MCF 10A (cell line): ENCODE measurements at regions of chr21 and their contacts with region 1.

Region 1: GRCh38 chr21:29298348-29299045 is at the start of gene BACH1:
- DNase-seq: peak; percentile 88
- H3K4me3 Mint-ChIP-seq: peak within 1 kb of the TSS; percentile 81
- H3K27ac Mint-ChIP-seq: peak within 1 kb of the TSS; percentile 61
- H3K4me1 Mint-ChIP-seq: peaks cover 38% of the 10 kb centered on the region
- H3K27me3 Mint-ChIP-seq: no peaks in the 10 kb centered on the region
- CTCF ChIP-seq: peak; percentile 35
- total RNA-seq, gene BACH1: 69.3 and 76.6 TPM in 2 replicates

Region 2: GRCh38 chr21:29091032-29091431 is 207.5 kb before region 1 on chr21:
- CTCF ChIA-PET with region 1: interaction called, 24 read pairs
- POLR2A ChIA-PET with region 1: interaction called, 37 read pairs
- intact Hi-C with region 1: loop called (anchors 2 kb)
- DNase-seq: peak; percentile 65
- H3K4me3 Mint-ChIP-seq: no peak overlapping the region
- H3K27ac Mint-ChIP-seq: peak overlapping the region; percentile 80
- H3K4me1 Mint-ChIP-seq: peaks cover 34% of the 10 kb centered on the region
- H3K27me3 Mint-ChIP-seq: no peaks in the 10 kb centered on the region
- CTCF ChIP-seq: no peak

Region 3: GRCh38 chr21:29164325-29164942 is 134.1 kb before region 1 on chr21:
- CTCF ChIA-PET with region 1: interaction called, 93 read pairs
- POLR2A ChIA-PET with region 1: interaction called, 89 read pairs
- intact Hi-C with region 1: loop called (anchors 1 kb)
- DNase-seq: peak; percentile 89
- H3K4me3 Mint-ChIP-seq: no peak overlapping the region
- H3K27ac Mint-ChIP-seq: peak overlapping the region; percentile 93
- H3K4me1 Mint-ChIP-seq: peaks cover 49% of the 10 kb centered on the region
- H3K27me3 Mint-ChIP-seq: no peaks in the 10 kb centered on the region
- CTCF ChIP-seq: peak; percentile 84

Region 4: DNA sequence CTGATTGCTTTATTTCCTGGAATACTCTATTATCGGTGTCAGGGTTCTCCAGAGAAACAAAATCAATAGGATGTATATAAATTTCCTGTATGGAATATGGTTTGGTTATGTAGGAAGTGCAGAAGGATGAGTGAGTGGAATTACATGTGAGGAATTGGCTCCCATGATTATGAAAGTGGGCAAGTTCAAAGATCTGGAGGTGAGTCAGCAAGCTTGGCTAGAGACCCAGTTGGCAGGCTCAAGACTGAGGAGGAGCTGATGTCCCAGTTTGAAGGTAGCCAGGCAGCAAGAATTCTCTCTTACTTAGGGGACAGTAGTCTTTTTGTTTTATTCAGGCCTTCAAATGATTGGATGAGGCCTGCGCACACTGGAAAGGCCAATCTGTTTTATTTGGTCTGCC is 110.6 kb before region 1 on chr21:
- CTCF ChIA-PET with region 1: interaction called, 10 read pairs
- POLR2A ChIA-PET with region 1: interaction called, 126 read pairs
- intact Hi-C with region 1: no loop called
- DNase-seq: peak; percentile 95
- H3K4me3 Mint-ChIP-seq: peak overlapping the region; percentile 51
- H3K27ac Mint-ChIP-seq: peak overlapping the region; percentile 84
- H3K4me1 Mint-ChIP-seq: peaks cover 43% of the 10 kb centered on the region
- H3K27me3 Mint-ChIP-seq: no peaks in the 10 kb centered on the region
- CTCF ChIP-seq: no peak

Region 5: GRCh38 chr21:29258626-29259335 is 39.7 kb before region 1 on chr21:
- CTCF ChIA-PET with region 1: interaction called, 7 read pairs
- POLR2A ChIA-PET with region 1: interaction called, 256 read pairs
- intact Hi-C with region 1: loop called (anchors 2 kb)
- DNase-seq: peak; percentile 89
- H3K4me3 Mint-ChIP-seq: peak overlapping the region; percentile 47
- H3K27ac Mint-ChIP-seq: peak overlapping the region; percentile 95
- H3K4me1 Mint-ChIP-seq: peaks cover 55% of the 10 kb centered on the region
- H3K27me3 Mint-ChIP-seq: no peaks in the 10 kb centered on the region
- CTCF ChIP-seq: no peak

Region 6: GRCh38 chr21:29318354-29318753 is 19.9 kb after region 1 on chr21:
- CTCF ChIA-PET with region 1: interaction called, 14 read pairs
- POLR2A ChIA-PET with region 1: interaction called, 108 read pairs
- intact Hi-C with region 1: no loop called
- DNase-seq: no peak
- H3K4me3 Mint-ChIP-seq: no peak overlapping the region
- H3K27ac Mint-ChIP-seq: no peak overlapping the region
- H3K4me1 Mint-ChIP-seq: peaks cover 54% of the 10 kb centered on the region
- H3K27me3 Mint-ChIP-seq: no peaks in the 10 kb centered on the region
- CTCF ChIP-seq: no peak

Region 7: DNA sequence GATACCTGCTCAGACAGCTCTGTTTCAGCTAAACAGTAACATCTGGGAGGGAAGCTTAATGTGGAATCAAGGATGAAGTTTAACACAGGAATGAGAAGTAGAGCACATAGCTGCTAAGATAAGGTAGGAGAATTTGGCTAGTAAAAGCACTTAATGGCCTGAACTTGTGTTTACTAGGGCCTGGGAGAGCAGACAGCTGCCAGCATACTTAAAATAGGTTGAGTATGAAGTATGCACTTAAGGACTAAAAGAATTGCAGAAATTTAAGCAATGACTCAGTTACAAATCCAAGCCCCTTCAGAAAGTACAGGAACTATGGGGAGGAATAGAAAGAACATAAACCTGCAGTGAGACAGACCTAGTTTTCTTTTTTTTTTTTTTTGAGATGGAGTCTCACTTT is 53.2 kb after region 1 on chr21:
- CTCF ChIA-PET with region 1: interaction called, 24 read pairs
- POLR2A ChIA-PET with region 1: interaction called, 155 read pairs
- intact Hi-C with region 1: loop called (anchors 1 kb)
- DNase-seq: no peak
- H3K4me3 Mint-ChIP-seq: no peak overlapping the region
- H3K27ac Mint-ChIP-seq: peak overlapping the region; percentile 21
- H3K4me1 Mint-ChIP-seq: peaks cover 13% of the 10 kb centered on the region
- H3K27me3 Mint-ChIP-seq: no peaks in the 10 kb centered on the region
- CTCF ChIP-seq: no peak

Region 8: DNA sequence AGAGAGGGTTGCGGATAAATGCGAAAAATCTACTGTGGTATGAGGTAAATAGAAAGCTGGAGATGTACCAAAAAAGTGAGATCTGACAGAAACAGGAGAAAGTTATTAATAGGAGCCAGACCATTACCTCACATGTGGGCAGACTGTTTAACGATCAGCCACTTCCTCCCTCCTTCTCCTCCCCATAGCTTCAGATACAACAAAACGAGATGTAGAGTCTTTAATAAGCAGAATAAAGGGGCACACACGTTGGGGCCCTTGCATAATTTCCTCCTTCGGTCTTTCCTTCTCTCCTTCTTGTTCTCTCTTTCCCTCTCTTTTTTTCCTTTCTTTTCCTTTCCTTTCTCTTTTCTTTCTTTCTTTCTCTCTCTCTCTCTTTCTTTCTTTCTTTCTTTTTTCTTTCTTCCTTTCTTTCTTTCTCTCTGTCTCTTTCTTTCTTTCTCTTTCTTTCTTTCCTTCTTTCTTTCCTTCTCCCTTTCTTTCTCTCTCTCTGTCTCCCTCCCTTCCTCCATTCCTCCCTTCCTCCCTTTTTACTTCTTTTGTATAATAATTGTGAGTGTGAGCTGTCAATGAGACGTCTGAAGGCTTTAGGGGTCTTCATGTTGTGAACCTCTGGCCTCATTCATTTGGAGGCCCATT is 399.2 kb after region 1 on chr21:
- CTCF ChIA-PET with region 1: no interaction called
- POLR2A ChIA-PET with region 1: no interaction called
- intact Hi-C with region 1: no loop called
- DNase-seq: no peak
- H3K4me3 Mint-ChIP-seq: no peak overlapping the region
- H3K27ac Mint-ChIP-seq: no peak overlapping the region
- H3K4me1 Mint-ChIP-seq: peaks cover 8% of the 10 kb centered on the region
- H3K27me3 Mint-ChIP-seq: no peaks in the 10 kb centered on the region
- CTCF ChIP-seq: no peak